IMR-90 (cell line): ENCODE measurements at regions of chrX and their contacts with region 1.

Region 1: DNA sequence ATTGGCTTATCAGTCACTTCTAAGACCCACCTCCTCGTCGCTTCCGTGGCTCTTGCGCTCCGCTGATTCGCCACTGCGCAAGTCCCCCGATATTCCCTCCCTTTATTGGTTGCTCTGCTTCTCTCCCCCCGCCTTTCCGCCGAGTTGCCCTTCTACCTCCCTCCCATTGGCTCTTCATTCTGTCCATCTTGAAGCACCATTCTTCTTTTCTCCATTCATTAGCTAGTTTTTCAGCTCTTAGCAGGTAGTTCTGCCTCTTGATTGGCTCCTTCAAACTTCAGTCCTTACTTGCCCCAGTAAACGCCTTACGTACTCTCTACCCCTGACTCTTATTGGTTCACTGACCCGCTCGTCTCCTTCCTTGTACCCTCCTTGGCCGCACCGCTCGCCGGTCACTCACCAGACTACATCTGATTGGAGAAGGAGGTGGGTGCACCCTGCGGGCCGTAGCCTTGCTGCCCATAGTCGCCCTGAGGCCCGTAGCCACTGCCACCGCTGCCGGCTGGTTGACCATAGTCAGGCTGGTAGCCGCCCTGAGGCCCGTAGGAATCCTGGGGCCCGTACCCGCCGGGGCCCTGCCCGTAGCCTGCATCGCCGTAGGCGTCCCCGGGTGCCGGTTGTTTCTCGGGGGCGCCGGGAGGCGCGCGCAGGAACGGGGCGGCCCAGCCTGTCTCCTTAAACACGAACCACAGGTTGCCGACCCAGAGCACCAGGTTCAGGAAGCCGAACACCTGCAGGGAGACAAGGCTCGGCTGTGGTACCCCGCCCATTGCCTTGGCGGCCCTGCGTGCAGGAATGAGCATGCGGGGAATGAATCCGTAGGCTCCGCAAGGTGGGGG is 5.1 kb upstream of the PRICKLE3 start:
- DNase-seq: peak; percentile 100
- ATAC-seq: peak; percentile 90
- H3K4me3 ChIP-seq: peak overlapping the region; percentile 64
- H3K27ac ChIP-seq: peak overlapping the region; percentile 37
- H3K4me1 ChIP-seq: no peaks in the 10 kb centered on the region; the same call in 1 of the 2 replicates
- H3K27me3 ChIP-seq: no peaks in the 10 kb centered on the region
- CTCF ChIP-seq: no peak
- POLR2A ChIP-seq: peak; percentile 33; the same call in 1 of the 2 replicates
- RAD21 ChIP-seq: no peak

Region 2: DNA sequence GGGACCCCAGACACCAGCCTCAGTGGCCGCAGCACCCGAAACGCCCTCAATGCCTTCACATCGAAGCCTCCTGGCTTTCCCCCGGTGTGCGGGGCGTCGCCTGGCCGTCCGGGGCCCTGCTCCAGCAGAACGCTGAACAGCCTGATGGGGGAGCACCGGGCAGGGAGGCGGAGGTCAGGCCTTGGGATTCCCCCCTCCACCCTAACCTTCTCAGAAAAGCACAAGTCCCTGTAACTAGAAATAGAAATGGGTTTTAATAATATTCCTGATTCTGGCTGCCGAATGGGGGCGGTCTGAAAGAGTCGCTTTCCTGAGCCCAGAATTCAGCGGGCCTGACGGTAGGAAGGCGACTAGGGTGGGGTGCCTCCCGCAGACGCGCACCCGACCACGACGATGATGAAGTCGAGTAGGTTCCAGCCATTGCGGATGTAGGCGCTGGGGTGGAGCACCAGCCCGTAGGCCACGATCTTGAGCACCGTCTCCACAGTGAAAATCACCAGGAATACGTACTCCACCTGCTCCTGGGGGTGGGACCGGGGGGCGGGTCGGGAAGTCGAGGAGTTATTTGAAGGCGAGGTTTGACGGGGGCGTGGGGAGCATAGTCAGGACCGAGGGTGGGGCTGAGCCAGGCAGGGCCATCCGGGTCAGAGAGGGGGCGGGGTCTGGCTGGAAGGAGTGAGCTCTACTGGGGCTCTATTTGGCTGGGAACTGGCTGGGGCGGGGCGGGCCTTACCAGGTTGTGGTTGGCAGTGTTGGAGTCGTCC is 39.4 kb after region 1 on chrX:
- CTCF ChIA-PET with region 1: no interaction called
- POLR2A ChIA-PET with region 1: no interaction called
- dilution Hi-C with region 1: no loop called
- in situ Hi-C with region 1: no loop called
- intact Hi-C with region 1: no loop called
- DNase-seq: no peak
- ATAC-seq: no peak
- H3K4me3 ChIP-seq: no peak overlapping the region
- H3K27ac ChIP-seq: no peak overlapping the region
- H3K4me1 ChIP-seq: no peaks in the 10 kb centered on the region
- H3K27me3 ChIP-seq: no peaks in the 10 kb centered on the region; the same call in 1 of the 2 replicates
- CTCF ChIP-seq: no peak
- POLR2A ChIP-seq: no peak
- RAD21 ChIP-seq: no peak

Region 3: GRCh38 chrX:49269010-49269767 is 77.9 kb after region 1 on chrX:
- CTCF ChIA-PET with region 1: no interaction called
- POLR2A ChIA-PET with region 1: no interaction called
- dilution Hi-C with region 1: no loop called
- in situ Hi-C with region 1: no loop called
- intact Hi-C with region 1: loop called (anchors 2 kb)
- DNase-seq: peak; percentile 97
- ATAC-seq: peak; percentile 92
- H3K4me3 ChIP-seq: peak overlapping the region; percentile 92
- H3K27ac ChIP-seq: peak overlapping the region; percentile 98
- H3K4me1 ChIP-seq: 0 out of 2 replicates have a peak, but pooled peaks cover 2% of the 10 kb centered on the region
- H3K27me3 ChIP-seq: no peaks in the 10 kb centered on the region
- CTCF ChIP-seq: no peak
- POLR2A ChIP-seq: peak; percentile 56; the same call in 1 of the 2 replicates
- RAD21 ChIP-seq: no peak

Region 4: GRCh38 chrX:49754233-49754857 is 563.1 kb after region 1 on chrX:
- CTCF ChIA-PET with region 1: no interaction called
- POLR2A ChIA-PET with region 1: no interaction called
- dilution Hi-C with region 1: no loop called
- in situ Hi-C with region 1: no loop called
- intact Hi-C with region 1: loop called (anchors 5 kb)
- DNase-seq: peak; percentile 28
- ATAC-seq: peak; percentile 80
- H3K4me3 ChIP-seq: no peak overlapping the region
- H3K27ac ChIP-seq: no peak overlapping the region
- H3K4me1 ChIP-seq: no peaks in the 10 kb centered on the region
- H3K27me3 ChIP-seq: peaks cover 14% of the 10 kb centered on the region
- CTCF ChIP-seq: peak; percentile 54
- POLR2A ChIP-seq: no peak
- RAD21 ChIP-seq: peak; percentile 62